ENCODE measurements at regions of chr14 and their contacts with region 1.

Region 1: GRCh38 chr14:67599698-67600561 is at the start of gene PIGH:
- DNase-seq: peak; percentile 95
- ATAC-seq: peak; percentile 99
- H3K4me3 Mint-ChIP-seq: peak within 1 kb of the TSS; percentile 82
- H3K27ac Mint-ChIP-seq: peak within 1 kb of the TSS; percentile 95
- H3K4me1 Mint-ChIP-seq: peaks cover 28% of the 10 kb centered on the region
- H3K27me3 Mint-ChIP-seq: no peaks in the 10 kb centered on the region
- total RNA-seq, gene PIGH: 14.8 to 17.5 TPM

Region 2: DNA sequence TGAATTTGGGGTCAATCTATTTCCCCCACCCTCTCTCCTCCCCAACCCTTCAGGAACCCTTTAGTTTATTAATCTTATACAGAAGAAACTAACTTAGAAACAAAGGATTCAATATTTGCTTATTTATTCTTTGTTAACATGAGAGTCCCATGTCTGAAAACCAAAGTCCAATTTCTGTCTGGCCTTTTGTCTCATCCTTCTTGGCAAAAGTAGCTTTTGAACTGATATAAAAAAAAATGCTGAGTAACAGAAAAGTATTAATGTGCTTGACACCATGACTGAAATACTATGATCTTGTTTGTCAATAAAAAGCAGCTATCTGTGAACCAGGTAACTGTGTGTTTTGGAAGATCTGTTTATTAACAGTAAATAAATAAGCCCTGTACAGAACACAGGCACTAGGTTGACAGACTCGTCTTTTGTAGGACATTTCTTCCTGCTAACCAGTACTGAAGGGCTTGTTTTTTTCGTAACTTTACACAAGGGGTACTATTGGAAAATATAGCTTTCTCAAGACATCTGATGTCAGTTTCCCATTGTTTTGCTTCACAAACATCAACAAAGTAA is 10.6 kb before region 1 on chr14:
- CTCF ChIA-PET with region 1: interaction called, 29 read pairs
- POLR2A ChIA-PET with region 1: no interaction called
- DNase-seq: no peak
- ATAC-seq: no peak
- H3K4me3 Mint-ChIP-seq: no peak overlapping the region
- H3K27ac Mint-ChIP-seq: no peak overlapping the region
- H3K4me1 Mint-ChIP-seq: no peaks in the 10 kb centered on the region
- H3K27me3 Mint-ChIP-seq: no peaks in the 10 kb centered on the region